ENCODE measurements at regions of chrX and their contacts with region 1.

Region 1: GRCh38 chrX:103157496-103158320 is 57.2 kb upstream of the BEX4 start:
- DNase-seq: peak; percentile 78
- ATAC-seq: peak; percentile 53
- H3K4me3 ChIP-seq: no peak overlapping the region
- H3K27ac ChIP-seq: peak overlapping the region; percentile 60
- H3K4me1 ChIP-seq: peaks cover 31% of the 10 kb centered on the region
- H3K27me3 ChIP-seq: no peaks in the 10 kb centered on the region
- CTCF ChIP-seq: peak; percentile 80

Region 2: GRCh38 chrX:103012945-103013344 is 144.8 kb before region 1 on chrX:
- CTCF ChIA-PET with region 1: no interaction called
- POLR2A ChIA-PET with region 1: no interaction called
- intact Hi-C with region 1: loop called (anchors 5 kb)
- DNase-seq: peak; percentile 69
- ATAC-seq: peak; percentile 62
- H3K4me3 ChIP-seq: no peak overlapping the region
- H3K27ac ChIP-seq: peak overlapping the region; percentile 37
- H3K4me1 ChIP-seq: 0 out of 2 replicates have a peak, but pooled peaks cover 7% of the 10 kb centered on the region
- H3K27me3 ChIP-seq: no peaks in the 10 kb centered on the region
- CTCF ChIP-seq: no peak

Region 3: DNA sequence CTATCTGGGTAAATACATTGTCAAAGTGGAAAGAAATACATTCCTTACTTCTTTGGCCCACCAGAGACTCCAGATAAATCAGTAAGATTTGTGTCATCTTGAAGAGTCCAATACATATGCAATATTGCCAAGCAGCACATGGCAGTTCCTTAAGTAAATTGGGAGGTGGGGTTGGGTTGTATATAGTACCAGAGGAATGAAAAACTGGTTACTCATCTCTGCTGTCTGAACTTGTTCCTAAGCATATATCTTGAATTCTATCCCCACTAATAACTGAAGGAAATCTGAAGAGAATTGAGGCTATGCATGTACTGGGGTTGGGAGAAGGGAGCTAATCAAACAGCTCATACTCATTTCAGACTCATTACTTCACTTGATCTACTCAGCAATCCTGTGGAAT is 82.4 kb after region 1 on chrX:
- CTCF ChIA-PET with region 1: no interaction called
- POLR2A ChIA-PET with region 1: no interaction called
- intact Hi-C with region 1: no loop called
- DNase-seq: no peak
- ATAC-seq: no peak
- H3K4me3 ChIP-seq: no peak overlapping the region
- H3K27ac ChIP-seq: no peak overlapping the region
- H3K4me1 ChIP-seq: no peaks in the 10 kb centered on the region
- H3K27me3 ChIP-seq: no peaks in the 10 kb centered on the region
- CTCF ChIP-seq: no peak

Region 4: DNA sequence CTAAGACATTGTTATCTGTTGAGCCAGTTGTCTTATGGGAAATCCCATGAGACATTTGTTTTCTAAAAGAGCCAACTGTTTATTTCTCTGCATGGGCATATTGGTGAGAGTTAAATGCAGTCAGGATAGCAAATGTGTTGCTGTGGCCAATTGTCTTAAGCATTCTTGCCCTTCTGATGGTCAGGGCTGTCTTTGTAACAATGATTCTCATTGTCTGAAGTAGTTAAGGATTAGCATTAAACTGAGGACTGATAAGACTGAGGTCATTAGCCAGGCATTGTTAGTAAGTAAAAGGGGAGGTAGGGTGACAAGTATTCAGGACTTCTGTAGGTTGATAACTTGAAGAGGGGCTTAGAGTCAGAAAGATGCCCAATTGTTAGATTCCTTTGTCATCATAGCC is 540.0 kb after region 1 on chrX:
- CTCF ChIA-PET with region 1: no interaction called
- POLR2A ChIA-PET with region 1: no interaction called
- intact Hi-C with region 1: no loop called
- DNase-seq: no peak
- ATAC-seq: no peak
- H3K4me3 ChIP-seq: no peak overlapping the region
- H3K27ac ChIP-seq: no peak overlapping the region
- H3K4me1 ChIP-seq: peaks cover 8% of the 10 kb centered on the region
- H3K27me3 ChIP-seq: no peaks in the 10 kb centered on the region
- CTCF ChIP-seq: no peak